Heart left ventricle (tissue), 16 donors: ENCODE measurements at regions of chr6 and their contacts with region 1.

Region 1: DNA sequence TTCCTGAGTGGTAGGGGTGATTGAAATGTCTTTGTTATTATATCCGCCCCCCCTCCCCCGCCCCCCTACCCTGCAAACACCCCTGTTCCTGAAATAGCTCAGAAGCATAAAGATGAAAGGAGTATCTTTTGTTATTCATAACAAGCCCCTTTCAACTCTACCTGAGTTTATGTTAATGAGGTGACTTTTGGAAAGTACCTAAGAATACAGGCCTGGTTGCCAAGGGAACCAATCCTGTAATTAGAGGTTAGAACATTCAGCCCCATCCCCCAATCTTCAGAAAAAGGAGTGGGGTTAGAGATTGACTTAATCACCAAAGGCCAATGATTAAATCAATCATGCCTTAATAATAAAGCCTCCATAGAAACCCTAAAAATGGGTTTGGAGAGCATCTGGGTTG is 979.2 kb upstream of the GJE1 start:
- DNase-seq: no peak
- ATAC-seq: no peak
- H3K4me3 ChIP-seq: no peak overlapping the region
- H3K27ac ChIP-seq: peak overlapping the region in 2 of 12 donors; percentile 26 to 28
- H3K4me1 ChIP-seq: peaks cover 0 to 25% (median 6%) of the 10 kb centered on the region in 12 donors
- H3K27me3 ChIP-seq: no peaks in the 10 kb centered on the region
- CTCF ChIP-seq: no peak
- POLR2A ChIP-seq: no peak

Region 2: GRCh38 chr6:140979642-140980091 is 173.9 kb before region 1 on chr6:
- intact Hi-C with region 1: loop called in 1 of 10 experiments (anchors 10 kb)
- DNase-seq: peak in 4 of 5 donors; percentile 13 to 35 (median 26)
- ATAC-seq: peak; percentile 67 to 88 (median 81)
- H3K4me3 ChIP-seq: no peak overlapping the region
- H3K27ac ChIP-seq: peak overlapping the region in 11 of 12 donors; percentile 11 to 77 (median 42)
- H3K4me1 ChIP-seq: peaks cover 0 to 21% (median 6%) of the 10 kb centered on the region in 12 donors
- H3K27me3 ChIP-seq: no peaks in the 10 kb centered on the region
- CTCF ChIP-seq: no peak
- POLR2A ChIP-seq: no peak

Region 3: DNA sequence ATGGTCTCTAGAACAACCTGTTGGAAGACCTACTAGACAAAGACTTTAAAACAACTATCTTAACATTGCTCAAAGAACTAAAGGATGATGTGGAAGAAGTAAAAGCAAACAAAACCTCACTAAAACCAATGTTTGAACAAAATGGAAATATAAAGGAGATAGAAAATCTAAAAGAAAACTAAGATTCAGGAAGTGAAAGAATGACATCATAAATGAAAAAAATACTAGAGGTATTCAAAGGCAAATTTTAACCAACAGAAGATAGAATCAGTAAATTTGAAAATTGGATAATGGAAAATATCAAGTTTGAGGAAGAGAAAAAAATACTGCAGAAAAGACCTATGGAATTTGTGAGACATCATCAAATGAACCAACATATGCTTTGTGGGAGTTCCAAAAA is 65.0 kb after region 1 on chr6:
- intact Hi-C with region 1: loop called in 1 of 10 experiments (anchors 2 kb)
- DNase-seq: no peak
- ATAC-seq: no peak
- H3K4me3 ChIP-seq: no peak overlapping the region
- H3K27ac ChIP-seq: no peak overlapping the region
- H3K4me1 ChIP-seq: no peaks in the 10 kb centered on the region
- H3K27me3 ChIP-seq: no peaks in the 10 kb centered on the region
- CTCF ChIP-seq: no peak
- POLR2A ChIP-seq: no peak

Region 4: GRCh38 chr6:141282263-141282662 is 128.7 kb after region 1 on chr6:
- intact Hi-C with region 1: no loop called
- DNase-seq: no peak
- ATAC-seq: no peak
- H3K4me3 ChIP-seq: no peak overlapping the region
- H3K27ac ChIP-seq: no peak overlapping the region
- H3K4me1 ChIP-seq: no peaks in the 10 kb centered on the region
- H3K27me3 ChIP-seq: no peaks in the 10 kb centered on the region
- CTCF ChIP-seq: no peak
- POLR2A ChIP-seq: no peak